Colonic mucosa (tissue), 4 donors: ENCODE measurements at regions of chr9 and their contacts with region 1.

Region 1: GRCh38 chr9:26975693-26976059 is 19.5 kb downstream of the IFT74 start:
- DNase-seq: peak; percentile 46
- H3K4me3 ChIP-seq: no peak overlapping the region
- H3K27ac ChIP-seq: no peak overlapping the region
- H3K4me1 ChIP-seq: no peaks in the 10 kb centered on the region
- H3K27me3 ChIP-seq: no peaks in the 10 kb centered on the region
- CTCF ChIP-seq: peak; percentile 52

Region 2: GRCh38 chr9:26744191-26744965 is 231.3 kb before region 1 on chr9:
- intact Hi-C with region 1: loop called (anchors 5 kb)
- DNase-seq: no peak
- H3K4me3 ChIP-seq: no peak overlapping the region
- H3K27ac ChIP-seq: no peak overlapping the region
- H3K4me1 ChIP-seq: no peaks in the 10 kb centered on the region
- H3K27me3 ChIP-seq: no peaks in the 10 kb centered on the region
- CTCF ChIP-seq: peak; percentile 81

Region 3: GRCh38 chr9:26856413-26857032 is 119.2 kb before region 1 on chr9:
- intact Hi-C with region 1: loop called (anchors 10 kb)
- DNase-seq: peak; percentile 22
- H3K4me3 ChIP-seq: no peak overlapping the region
- H3K27ac ChIP-seq: no peak overlapping the region
- H3K4me1 ChIP-seq: no peaks in the 10 kb centered on the region
- H3K27me3 ChIP-seq: no peaks in the 10 kb centered on the region
- CTCF ChIP-seq: peak; percentile 43